ENCODE measurements at regions of chr13 and their contacts with region 1.

Region 1: GRCh38 chr13:21458813-21459701 is at the start of gene ZDHHC20:
- DNase-seq: peak; percentile 75 to 99 (median 88)
- ATAC-seq: peak; percentile 98
- H3K4me3 ChIP-seq: peak within 1 kb of the TSS; percentile 90
- H3K4me3 Mint-ChIP-seq: peak within 1 kb of the TSS; percentile 91 to 97 (median 94)
- H3K27ac ChIP-seq: peak within 1 kb of the TSS; percentile 97
- H3K27ac Mint-ChIP-seq: peak within 1 kb of the TSS; percentile 74 to 98 (median 94)
- H3K4me1 ChIP-seq: peaks cover 9 to 19% of the 10 kb centered on the region in 2 donors
- H3K4me1 Mint-ChIP-seq: peaks cover 27 to 55% (median 42%) of the 10 kb centered on the region in 7 donors
- H3K27me3 ChIP-seq: no peaks in the 10 kb centered on the region
- H3K27me3 Mint-ChIP-seq: peaks cover 0 to 7% (median 0%) of the 10 kb centered on the region in 5 donors
- total RNA-seq, gene ZDHHC20: 60.8 to 89.9 (median 71.7) TPM

Region 2: GRCh38 chr13:21326155-21327031 is 132.7 kb before region 1 on chr13:
- CTCF ChIA-PET with region 1: no interaction called
- POLR2A ChIA-PET with region 1: no interaction called
- intact Hi-C with region 1: loop called in 1 of 2 experiments (anchors 1 kb)
- DNase-seq: peak in 4 of 9 donors; percentile 14 to 27 (median 23)
- ATAC-seq: peak; percentile 51
- H3K4me3 ChIP-seq: peak overlapping the region; percentile 52
- H3K4me3 Mint-ChIP-seq: peak overlapping the region in 7 of 10 donors; percentile 64 to 75 (median 74)
- H3K27ac ChIP-seq: peak overlapping the region; percentile 41
- H3K27ac Mint-ChIP-seq: peak overlapping the region in 4 of 9 donors; percentile 50 to 71 (median 69)
- H3K4me1 ChIP-seq: no peaks in the 10 kb centered on the region
- H3K4me1 Mint-ChIP-seq: peaks cover 0 to 29% (median 5%) of the 10 kb centered on the region in 7 donors
- H3K27me3 ChIP-seq: no peaks in the 10 kb centered on the region
- H3K27me3 Mint-ChIP-seq: no peaks in the 10 kb centered on the region

Region 3: DNA sequence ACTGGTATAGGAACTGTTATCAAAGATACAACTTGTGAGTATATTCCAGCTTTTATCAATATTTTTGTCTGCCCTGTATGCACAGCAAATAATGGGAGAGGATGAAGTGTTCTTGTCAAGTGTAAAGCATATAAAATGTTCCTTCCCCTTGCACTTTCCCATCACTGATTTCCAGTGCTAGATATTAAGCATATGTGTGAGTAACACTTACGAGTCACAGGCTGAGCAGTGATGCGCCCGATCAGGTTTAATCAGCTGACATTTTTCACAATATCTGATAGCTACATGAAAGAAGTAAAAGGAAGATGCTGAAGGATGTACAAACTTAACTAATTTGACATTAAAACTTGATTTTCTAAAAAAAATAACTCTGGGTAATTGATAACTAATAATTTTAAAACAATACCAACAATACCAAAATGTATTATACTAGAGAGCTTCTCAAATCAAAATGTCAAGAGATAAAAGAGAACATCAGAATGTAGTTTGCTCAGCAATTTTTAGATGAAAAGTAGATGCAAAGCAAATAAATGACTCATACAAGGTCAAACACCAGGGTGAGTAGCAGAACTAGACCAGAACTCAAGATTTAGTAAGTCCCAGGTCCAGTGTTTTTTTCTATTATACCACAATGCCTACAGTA is 56.4 kb before region 1 on chr13:
- CTCF ChIA-PET with region 1: no interaction called
- POLR2A ChIA-PET with region 1: interaction called, 4 read pairs
- intact Hi-C with region 1: loop called (anchors 2 kb)
- DNase-seq: no peak
- ATAC-seq: no peak
- H3K4me3 ChIP-seq: no peak overlapping the region
- H3K4me3 Mint-ChIP-seq: no peak overlapping the region
- H3K27ac ChIP-seq: no peak overlapping the region
- H3K27ac Mint-ChIP-seq: peak overlapping the region in 8 of 9 donors; percentile 1 to 78 (median 56)
- H3K4me1 ChIP-seq: peaks cover 6 to 13% of the 10 kb centered on the region in 2 donors
- H3K4me1 Mint-ChIP-seq: peaks cover 19 to 56% (median 47%) of the 10 kb centered on the region in 7 donors
- H3K27me3 ChIP-seq: no peaks in the 10 kb centered on the region
- H3K27me3 Mint-ChIP-seq: no peaks in the 10 kb centered on the region

Region 4: GRCh38 chr13:21420706-21421105 is 38.4 kb before region 1 on chr13:
- CTCF ChIA-PET with region 1: no interaction called
- POLR2A ChIA-PET with region 1: interaction called, 3 read pairs
- intact Hi-C with region 1: loop called in 1 of 2 experiments (anchors 5 kb)
- DNase-seq: no peak
- ATAC-seq: no peak
- H3K4me3 ChIP-seq: no peak overlapping the region
- H3K4me3 Mint-ChIP-seq: no peak overlapping the region
- H3K27ac ChIP-seq: no peak overlapping the region
- H3K27ac Mint-ChIP-seq: peak overlapping the region in 1 of 9 donors; percentile 41
- H3K4me1 ChIP-seq: no peaks in the 10 kb centered on the region
- H3K4me1 Mint-ChIP-seq: peaks cover 2 to 25% (median 19%) of the 10 kb centered on the region in 7 donors
- H3K27me3 ChIP-seq: no peaks in the 10 kb centered on the region
- H3K27me3 Mint-ChIP-seq: no peaks in the 10 kb centered on the region

Region 5: DNA sequence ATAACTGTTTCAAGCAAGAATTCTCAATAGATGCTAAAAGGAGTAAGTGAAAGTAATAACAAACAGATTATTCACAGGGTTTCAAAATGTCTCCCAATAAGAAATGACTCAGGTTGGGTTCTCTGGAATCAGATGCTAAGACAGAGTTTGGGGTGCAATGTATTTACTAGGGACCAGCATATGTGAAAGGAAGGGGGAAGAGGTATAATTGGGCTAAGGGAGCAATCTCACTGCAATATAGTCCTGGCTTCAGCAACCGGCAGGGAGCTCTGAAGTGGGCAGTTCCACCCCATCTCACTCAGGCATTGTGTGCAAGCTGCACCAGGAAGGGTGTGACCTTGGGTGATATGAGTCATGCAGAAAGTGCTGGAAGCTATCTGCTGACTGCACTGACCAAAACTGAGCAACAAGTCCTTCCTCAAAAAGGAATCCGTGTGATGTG is 23.3 kb before region 1 on chr13:
- CTCF ChIA-PET with region 1: no interaction called
- POLR2A ChIA-PET with region 1: no interaction called
- intact Hi-C with region 1: loop called (anchors 1 to 2 kb)
- DNase-seq: peak in 1 of 9 donors; percentile 38
- ATAC-seq: peak; percentile 95
- H3K4me3 ChIP-seq: peak overlapping the region; percentile 11
- H3K4me3 Mint-ChIP-seq: peak overlapping the region in 5 of 10 donors; percentile 3 to 68 (median 18)
- H3K27ac ChIP-seq: no peak overlapping the region
- H3K27ac Mint-ChIP-seq: peak overlapping the region in 3 of 9 donors; percentile 25 to 86 (median 33)
- H3K4me1 ChIP-seq: peaks cover 9 to 21% of the 10 kb centered on the region in 2 donors
- H3K4me1 Mint-ChIP-seq: peaks cover 30 to 61% (median 54%) of the 10 kb centered on the region in 7 donors
- H3K27me3 ChIP-seq: no peaks in the 10 kb centered on the region
- H3K27me3 Mint-ChIP-seq: no peaks in the 10 kb centered on the region

Region 6: DNA sequence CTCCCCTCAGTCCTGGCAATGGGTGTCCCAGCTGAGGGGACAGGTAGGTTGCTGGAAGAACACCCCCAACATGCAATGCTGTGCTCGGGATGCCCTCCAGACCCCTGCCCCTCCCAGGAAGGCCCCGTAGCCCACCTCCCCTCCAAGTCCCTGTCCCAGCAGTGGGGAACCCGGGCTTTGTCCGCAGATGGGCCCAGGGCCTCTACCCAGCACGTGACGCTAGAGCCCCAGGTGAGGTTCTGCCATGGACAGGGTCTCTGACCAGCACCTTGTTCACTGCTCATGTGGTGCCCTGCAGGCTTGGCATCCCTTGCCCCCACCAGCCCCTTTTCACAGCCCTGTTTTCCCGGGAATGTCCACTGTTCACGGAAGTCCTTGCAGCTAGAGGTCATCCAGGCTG is 1501.8 kb after region 1 on chr13:
- CTCF ChIA-PET with region 1: no interaction called
- POLR2A ChIA-PET with region 1: no interaction called
- intact Hi-C with region 1: no loop called
- DNase-seq: no peak
- ATAC-seq: no peak
- H3K4me3 ChIP-seq: no peak overlapping the region
- H3K4me3 Mint-ChIP-seq: no peak overlapping the region
- H3K27ac ChIP-seq: no peak overlapping the region
- H3K27ac Mint-ChIP-seq: no peak overlapping the region
- H3K4me1 ChIP-seq: no peaks in the 10 kb centered on the region
- H3K4me1 Mint-ChIP-seq: no peaks in the 10 kb centered on the region
- H3K27me3 ChIP-seq: no peaks in the 10 kb centered on the region
- H3K27me3 Mint-ChIP-seq: peaks cover 0 to 15% (median 0%) of the 10 kb centered on the region in 5 donors

Measured in naive thymus-derived CD4-positive, alpha-beta T cell (primary cell).